Activated naive CD4-positive, alpha-beta T cell treated with anti-CD3 and anti-CD28 coated beads, Interleukin-2, amount 10 ng/mL, durations not matched to agents 7 days and 5 days (primary cell): ENCODE measurements at regions of chr1 and their contacts with region 1.

Region 1: GRCh38 chr1:54944610-54945544 is 35.6 kb upstream of the TMEM61 start:
- DNase-seq: peak; percentile 79
- H3K4me3 Mint-ChIP-seq: no peak overlapping the region
- H3K27ac Mint-ChIP-seq: no peak overlapping the region
- H3K4me1 Mint-ChIP-seq: peaks cover 9% of the 10 kb centered on the region
- H3K27me3 Mint-ChIP-seq: peaks cover 39% of the 10 kb centered on the region

Region 2: GRCh38 chr1:54754045-54754444 is 190.8 kb before region 1 on chr1:
- CTCF ChIA-PET with region 1: no interaction called
- DNase-seq: no peak
- H3K4me3 Mint-ChIP-seq: no peak overlapping the region
- H3K27ac Mint-ChIP-seq: no peak overlapping the region
- H3K4me1 Mint-ChIP-seq: no peaks in the 10 kb centered on the region
- H3K27me3 Mint-ChIP-seq: no peaks in the 10 kb centered on the region

Region 3: DNA sequence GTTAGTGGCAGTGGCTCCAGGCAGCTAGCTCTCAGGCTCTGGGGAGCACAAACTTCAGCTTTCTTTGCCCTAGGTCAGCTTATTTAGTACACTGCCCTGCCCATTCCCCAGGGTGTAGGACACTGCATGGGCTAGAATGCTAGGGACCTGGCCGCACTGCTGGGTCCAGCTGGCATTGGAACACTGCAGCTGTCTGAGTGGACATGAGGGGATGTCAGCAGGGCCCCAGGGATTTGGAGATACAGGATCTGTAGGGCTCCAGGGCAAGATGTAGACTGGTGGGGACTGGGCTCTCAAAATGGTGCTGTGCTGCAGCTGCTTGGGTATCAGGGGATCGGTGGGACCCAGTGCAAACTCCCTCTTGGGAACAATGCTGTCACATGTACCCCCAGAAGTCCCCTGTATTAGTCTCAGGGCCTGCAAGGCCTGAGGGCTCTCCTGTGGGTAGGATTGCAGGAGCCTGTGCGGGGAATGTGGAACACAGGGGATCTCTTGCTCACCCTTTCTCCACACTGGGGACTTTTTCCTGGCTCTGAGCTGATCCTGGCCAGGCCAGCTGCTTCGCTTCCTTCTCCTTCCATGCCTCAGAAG is 118.6 kb before region 1 on chr1:
- CTCF ChIA-PET with region 1: no interaction called
- DNase-seq: no peak
- H3K4me3 Mint-ChIP-seq: no peak overlapping the region
- H3K27ac Mint-ChIP-seq: no peak overlapping the region
- H3K4me1 Mint-ChIP-seq: no peaks in the 10 kb centered on the region
- H3K27me3 Mint-ChIP-seq: peaks cover 3% of the 10 kb centered on the region

Region 4: DNA sequence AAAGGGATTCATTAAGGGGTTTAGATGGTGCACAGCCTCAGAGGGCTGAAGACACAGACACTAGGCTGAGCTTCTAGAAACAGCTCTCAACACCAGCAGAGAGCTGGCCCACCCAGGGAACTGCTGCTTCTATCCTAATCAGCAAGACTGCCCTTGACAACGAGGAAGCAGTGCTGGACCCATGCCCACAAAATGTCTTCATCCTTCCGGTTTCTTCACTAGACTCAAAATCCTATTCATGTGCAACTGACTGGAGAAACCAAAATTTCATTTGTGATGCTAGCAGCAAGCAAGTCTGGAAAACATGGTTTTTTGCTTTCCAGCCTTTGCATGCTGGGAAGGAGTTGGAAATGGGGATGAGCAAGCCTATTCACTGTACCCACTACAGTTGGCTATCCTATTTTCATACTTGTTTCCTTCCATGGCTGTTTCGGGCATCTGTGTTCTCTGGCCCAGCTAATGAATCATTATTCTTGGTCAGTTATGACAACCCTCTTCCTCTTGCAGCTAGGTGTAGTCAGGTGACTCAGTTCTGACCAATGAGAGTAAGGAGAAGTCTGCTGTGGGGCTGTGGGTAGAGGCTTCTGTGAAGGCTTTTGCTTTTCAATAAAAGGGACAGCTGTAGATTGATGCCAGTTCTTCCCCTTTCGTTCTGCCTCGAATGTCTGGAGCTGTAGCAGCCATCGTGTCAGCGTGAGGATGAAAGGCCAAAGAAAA is 20.9 kb after region 1 on chr1:
- CTCF ChIA-PET with region 1: interaction called, 12 read pairs
- DNase-seq: no peak
- H3K4me3 Mint-ChIP-seq: no peak overlapping the region
- H3K27ac Mint-ChIP-seq: no peak overlapping the region
- H3K4me1 Mint-ChIP-seq: peaks cover 7% of the 10 kb centered on the region
- H3K27me3 Mint-ChIP-seq: peaks cover 33% of the 10 kb centered on the region

Region 5: DNA sequence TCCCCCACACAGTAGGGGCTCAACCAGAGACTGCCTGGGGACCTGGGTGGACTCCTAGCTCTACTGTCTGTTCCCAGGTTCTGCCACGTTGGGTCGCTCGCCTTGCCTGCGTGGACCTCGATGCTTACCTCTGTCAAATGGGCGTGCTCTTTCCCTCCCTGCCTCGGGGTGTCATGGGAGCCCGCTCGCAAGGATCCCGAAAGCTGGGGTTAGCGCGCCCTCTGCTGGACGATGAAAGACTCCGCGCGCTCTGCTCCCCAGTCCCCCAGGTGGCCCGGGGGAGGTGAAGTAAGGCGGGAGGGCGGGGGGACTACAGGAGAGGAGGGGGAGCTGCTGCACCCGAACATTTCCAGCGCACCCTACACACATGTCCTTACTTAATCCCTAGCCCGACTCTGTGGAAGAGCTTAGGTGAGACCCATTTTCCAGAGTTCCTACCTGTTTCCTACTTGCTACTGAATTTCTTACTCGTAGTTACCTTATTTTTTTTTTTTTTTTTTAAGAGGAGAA is 51.5 kb after region 1 on chr1:
- CTCF ChIA-PET with region 1: interaction called, 95 read pairs
- DNase-seq: peak; percentile 82
- H3K4me3 Mint-ChIP-seq: no peak overlapping the region
- H3K27ac Mint-ChIP-seq: peak overlapping the region; percentile 2
- H3K4me1 Mint-ChIP-seq: peaks cover 29% of the 10 kb centered on the region
- H3K27me3 Mint-ChIP-seq: peaks cover 61% of the 10 kb centered on the region

Region 6: DNA sequence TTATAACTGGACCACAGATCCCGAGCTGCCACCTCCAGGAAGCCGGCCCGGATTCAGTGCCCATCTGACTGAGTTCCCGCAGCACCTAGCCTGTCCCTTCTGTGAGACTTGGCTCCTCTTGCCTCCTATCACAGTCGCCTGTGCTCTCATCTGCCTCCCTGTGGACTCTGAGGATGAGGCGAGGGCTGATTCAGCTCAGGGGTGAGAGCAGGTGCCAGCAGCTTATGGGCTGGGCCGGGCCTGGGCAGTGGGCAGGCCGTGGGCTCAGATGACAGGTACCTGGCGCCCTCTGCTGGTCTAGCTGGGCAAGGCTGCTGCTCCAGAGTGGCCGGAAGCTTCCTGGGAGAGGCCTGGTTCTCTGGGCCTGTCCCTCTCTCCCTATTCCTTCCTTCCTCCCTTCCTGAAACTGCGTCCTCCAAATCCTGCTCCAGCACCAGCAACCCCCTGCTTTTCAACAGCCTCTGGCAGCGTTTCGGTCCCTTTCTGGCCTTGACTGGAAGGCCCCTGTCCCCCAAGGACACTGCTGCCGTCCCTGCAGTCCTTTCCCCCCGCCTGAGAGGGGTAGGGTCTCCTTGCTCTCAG is 77.2 kb after region 1 on chr1:
- CTCF ChIA-PET with region 1: interaction called, 50 read pairs
- DNase-seq: peak; percentile 76
- H3K4me3 Mint-ChIP-seq: no peak overlapping the region
- H3K27ac Mint-ChIP-seq: no peak overlapping the region
- H3K4me1 Mint-ChIP-seq: peaks cover 3% of the 10 kb centered on the region
- H3K27me3 Mint-ChIP-seq: peaks cover 31% of the 10 kb centered on the region